AG04449 (cell line): ENCODE measurements at regions of chr1 and their contacts with region 1.

Region 1: GRCh38 chr1:24635195-24635843 is 7.8 kb upstream of the SRRM1 start:
- DNase-seq: peak; percentile 56
- H3K4me3 ChIP-seq: no peak overlapping the region
- CTCF ChIP-seq: peak; percentile 56

Region 2: DNA sequence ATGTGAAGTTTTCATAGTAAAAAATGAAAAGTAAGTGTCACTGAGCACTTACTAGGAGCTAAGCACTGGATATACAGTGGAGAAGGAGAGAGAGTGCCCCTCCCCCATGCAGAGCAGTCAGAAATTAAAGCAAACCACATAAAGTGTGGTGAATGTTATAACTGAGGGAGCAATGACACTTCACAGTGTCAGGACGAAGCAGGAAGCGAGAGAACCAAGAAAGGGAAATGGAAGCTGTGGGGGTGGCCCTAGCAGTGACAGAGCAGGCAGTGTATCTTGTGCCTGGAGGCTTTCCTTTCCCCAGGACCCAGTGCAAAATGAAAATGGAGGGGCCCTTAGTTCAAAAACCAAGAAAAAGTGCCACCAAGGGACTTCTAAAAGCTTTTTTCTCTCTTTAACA is 154.2 kb before region 1 on chr1:
- CTCF ChIA-PET with region 1: no interaction called
- POLR2A ChIA-PET with region 1: no interaction called
- DNase-seq: no peak
- H3K4me3 ChIP-seq: no peak overlapping the region
- CTCF ChIP-seq: no peak

Region 3: DNA sequence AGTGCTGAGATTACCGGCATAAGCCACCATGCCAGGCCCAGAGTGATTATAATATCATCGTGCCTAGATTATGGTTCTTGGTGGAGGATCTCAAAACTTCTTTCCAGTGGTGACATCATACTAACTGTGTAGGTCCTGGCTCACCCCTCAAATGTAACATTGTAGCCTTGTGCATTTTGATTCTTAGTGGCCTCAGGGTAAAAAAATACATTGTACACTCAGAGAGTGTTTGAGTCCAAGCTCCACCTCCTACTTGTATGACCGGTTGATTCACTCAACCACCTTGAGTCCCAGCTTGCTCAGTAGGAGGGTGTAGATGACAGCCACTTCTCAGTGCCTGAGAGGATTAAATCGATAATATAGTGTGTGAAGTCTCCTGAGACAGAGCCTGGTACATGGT is 41.2 kb before region 1 on chr1:
- CTCF ChIA-PET with region 1: interaction called, 54 read pairs
- POLR2A ChIA-PET with region 1: no interaction called
- DNase-seq: no peak
- H3K4me3 ChIP-seq: no peak overlapping the region
- CTCF ChIP-seq: no peak

Region 4: DNA sequence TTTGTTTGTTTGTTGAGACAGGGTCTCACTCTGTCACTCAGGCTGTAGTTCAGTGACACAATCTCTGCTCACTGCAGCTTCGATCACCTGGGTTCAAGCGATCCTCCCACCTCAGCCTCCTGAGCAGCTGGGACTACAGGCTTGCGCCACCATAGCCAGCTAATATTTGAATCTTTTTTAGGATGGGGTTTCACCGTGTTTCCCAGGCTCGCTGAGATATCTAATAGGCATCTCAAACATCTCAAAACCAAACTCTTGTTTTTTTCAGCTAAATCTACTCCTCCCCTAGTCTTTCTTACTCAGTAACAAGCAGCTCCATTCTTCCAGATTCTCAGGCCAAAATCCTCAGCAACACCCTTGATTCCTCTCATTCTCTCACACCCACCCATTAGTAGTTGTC is 14.2 kb before region 1 on chr1:
- CTCF ChIA-PET with region 1: interaction called, 37 read pairs
- POLR2A ChIA-PET with region 1: no interaction called
- DNase-seq: no peak
- H3K4me3 ChIP-seq: no peak overlapping the region
- CTCF ChIP-seq: no peak

Region 5: GRCh38 chr1:24648919-24649318 is 13.6 kb after region 1 on chr1:
- CTCF ChIA-PET with region 1: no interaction called
- POLR2A ChIA-PET with region 1: no interaction called
- DNase-seq: no peak
- H3K4me3 ChIP-seq: no peak overlapping the region
- CTCF ChIP-seq: no peak